ENCODE measurements at regions of chr6 and their contacts with region 1.

Region 1: GRCh38 chr6:166446567-166447065 is 63.9 kb upstream of the MPC1 start:
- DNase-seq: no peak
- H3K4me3 ChIP-seq: no peak overlapping the region
- H3K27ac ChIP-seq: no peak overlapping the region
- H3K4me1 ChIP-seq: no peaks in the 10 kb centered on the region
- H3K27me3 ChIP-seq: no peaks in the 10 kb centered on the region
- CTCF ChIP-seq: no peak
- POLR2A ChIP-seq: no peak

Region 2: GRCh38 chr6:166619912-166620311 is 173.3 kb after region 1 on chr6:
- intact Hi-C with region 1: loop called (anchors 2 kb)
- DNase-seq: peak in 1 of 2 donors; percentile 75
- H3K4me3 ChIP-seq: no peak overlapping the region
- H3K27ac ChIP-seq: peak overlapping the region; percentile 74 to 79
- H3K4me1 ChIP-seq: peaks cover 0 to 13% of the 10 kb centered on the region in 2 donors
- H3K27me3 ChIP-seq: no peaks in the 10 kb centered on the region
- CTCF ChIP-seq: no peak
- POLR2A ChIP-seq: no peak